PC-3 (cell line): ENCODE measurements at regions of chr14 and their contacts with region 1.

Region 1: DNA sequence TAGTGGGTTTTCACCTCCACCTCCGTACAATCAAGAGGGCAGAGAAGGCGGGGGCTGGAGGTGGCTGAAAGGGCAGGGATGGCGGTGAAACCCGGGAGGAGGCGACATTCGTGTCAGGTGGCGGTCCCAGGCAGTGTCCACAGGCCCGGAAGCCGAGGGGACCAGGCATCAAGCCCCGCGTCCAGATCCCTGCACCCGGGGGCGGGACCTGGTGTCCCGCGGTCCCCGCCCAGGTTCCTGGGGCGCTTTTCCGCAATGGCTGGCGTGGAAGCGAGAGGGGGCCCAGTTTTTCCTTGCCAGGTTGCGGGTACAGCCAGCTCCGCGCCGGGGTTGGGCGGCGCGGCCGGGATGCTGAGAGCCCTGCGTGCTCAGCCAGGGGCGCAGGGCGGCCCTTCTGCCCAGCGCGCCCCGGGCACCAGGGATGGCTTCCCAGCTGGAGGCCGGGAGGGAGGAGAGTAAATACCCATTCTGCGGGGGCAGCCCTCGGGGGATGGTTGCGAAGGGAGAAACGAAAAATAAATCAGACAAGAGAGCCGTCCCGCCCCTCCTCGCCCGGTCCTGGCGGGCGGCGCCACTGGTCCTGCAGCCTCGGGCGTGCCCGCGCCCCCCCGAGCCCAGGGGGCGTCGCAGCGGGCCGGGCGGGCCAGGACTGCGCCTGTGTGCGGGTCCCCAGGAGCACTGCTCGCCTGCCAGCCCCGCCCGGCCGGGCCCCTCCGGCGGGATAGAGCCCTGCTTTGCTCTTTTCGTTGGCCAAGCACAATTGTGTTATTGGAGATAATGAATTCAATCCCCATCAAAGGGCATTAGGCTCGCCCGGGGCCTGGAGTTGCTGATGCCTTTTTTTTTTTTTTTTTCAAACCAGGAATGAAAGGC is 11.5 kb downstream of the FOXA1 start:
- DNase-seq: peak; percentile 85
- ATAC-seq: peak; percentile 26
- H3K4me3 ChIP-seq: peak overlapping the region; percentile 96
- H3K27ac ChIP-seq: peak overlapping the region; percentile 99
- H3K4me1 ChIP-seq: peaks cover 86% of the 10 kb centered on the region
- H3K27me3 ChIP-seq: no peaks in the 10 kb centered on the region
- CTCF ChIP-seq: no peak; the same call in 1 of the 2 replicates

Region 2: GRCh38 chr14:36661756-36662498 is 921.7 kb before region 1 on chr14 and contains the start of gene PAX9:
- CTCF ChIA-PET with region 1: no interaction called
- POLR2A ChIA-PET with region 1: no interaction called
- intact Hi-C with region 1: loop called (anchors 2 kb)
- DNase-seq: peak; percentile 99
- ATAC-seq: peak; percentile 78
- H3K4me3 ChIP-seq: peak within 1 kb of the TSS; percentile 89
- H3K27ac ChIP-seq: peak within 1 kb of the TSS; percentile 77
- H3K4me1 ChIP-seq: peaks cover 25% of the 10 kb centered on the region
- H3K27me3 ChIP-seq: no peaks in the 10 kb centered on the region
- CTCF ChIP-seq: no peak
- total RNA-seq, gene PAX9: 14.3 and 14.9 TPM in 2 replicates

Region 3: GRCh38 chr14:37246427-37246914 is 337.1 kb before region 1 on chr14:
- CTCF ChIA-PET with region 1: no interaction called
- POLR2A ChIA-PET with region 1: no interaction called
- intact Hi-C with region 1: loop called (anchors 1 kb)
- DNase-seq: peak; percentile 79
- ATAC-seq: peak; percentile 65
- H3K4me3 ChIP-seq: no peak overlapping the region
- H3K27ac ChIP-seq: no peak overlapping the region
- H3K4me1 ChIP-seq: no peaks in the 10 kb centered on the region; the same call in 1 of the 2 replicates
- H3K27me3 ChIP-seq: no peaks in the 10 kb centered on the region
- CTCF ChIP-seq: peak; percentile 89

Region 4: DNA sequence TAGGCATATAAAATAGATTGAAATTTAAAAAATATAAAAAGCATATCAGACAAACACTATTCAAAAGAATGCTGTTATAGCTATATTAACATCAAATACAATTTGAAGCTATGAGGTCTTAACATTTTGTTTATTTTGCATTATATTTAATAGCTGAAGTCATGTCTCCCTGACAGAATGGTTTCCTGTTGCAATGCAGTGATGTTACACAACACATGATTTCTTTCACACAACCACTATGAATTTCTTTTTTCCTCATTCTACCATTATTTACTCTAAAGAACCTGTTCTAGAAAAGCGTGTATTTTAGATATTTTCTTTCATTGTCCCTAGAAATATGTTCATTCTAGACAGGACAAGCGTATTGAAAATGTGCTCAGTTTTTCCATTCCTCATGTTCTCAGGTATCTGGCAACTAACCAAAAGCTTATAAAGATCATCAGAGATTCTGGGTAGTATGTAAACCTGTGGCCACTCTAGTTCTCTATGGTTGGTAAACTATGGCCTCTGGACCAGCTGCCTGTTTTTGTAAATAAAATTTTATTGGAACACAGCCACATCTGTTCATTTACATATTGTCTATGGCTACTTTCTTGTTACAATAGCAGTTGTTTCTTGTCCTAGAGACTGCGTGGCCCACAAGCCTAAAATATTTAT is 172.4 kb before region 1 on chr14:
- CTCF ChIA-PET with region 1: no interaction called
- POLR2A ChIA-PET with region 1: interaction called, 23 read pairs
- intact Hi-C with region 1: no loop called
- DNase-seq: no peak
- ATAC-seq: no peak
- H3K4me3 ChIP-seq: no peak overlapping the region
- H3K27ac ChIP-seq: no peak overlapping the region
- H3K4me1 ChIP-seq: no peaks in the 10 kb centered on the region
- H3K27me3 ChIP-seq: no peaks in the 10 kb centered on the region
- CTCF ChIP-seq: no peak

Region 5: GRCh38 chr14:37546621-37547447 is 36.8 kb before region 1 on chr14:
- CTCF ChIA-PET with region 1: interaction called, 3 read pairs
- POLR2A ChIA-PET with region 1: interaction called, 4 read pairs
- intact Hi-C with region 1: loop called (anchors 1 kb)
- DNase-seq: peak; percentile 89
- ATAC-seq: peak; percentile 87
- H3K4me3 ChIP-seq: peak overlapping the region; percentile 65
- H3K27ac ChIP-seq: peak overlapping the region; percentile 97
- H3K4me1 ChIP-seq: peaks cover 62% of the 10 kb centered on the region
- H3K27me3 ChIP-seq: no peaks in the 10 kb centered on the region
- CTCF ChIP-seq: no peak

Region 6: DNA sequence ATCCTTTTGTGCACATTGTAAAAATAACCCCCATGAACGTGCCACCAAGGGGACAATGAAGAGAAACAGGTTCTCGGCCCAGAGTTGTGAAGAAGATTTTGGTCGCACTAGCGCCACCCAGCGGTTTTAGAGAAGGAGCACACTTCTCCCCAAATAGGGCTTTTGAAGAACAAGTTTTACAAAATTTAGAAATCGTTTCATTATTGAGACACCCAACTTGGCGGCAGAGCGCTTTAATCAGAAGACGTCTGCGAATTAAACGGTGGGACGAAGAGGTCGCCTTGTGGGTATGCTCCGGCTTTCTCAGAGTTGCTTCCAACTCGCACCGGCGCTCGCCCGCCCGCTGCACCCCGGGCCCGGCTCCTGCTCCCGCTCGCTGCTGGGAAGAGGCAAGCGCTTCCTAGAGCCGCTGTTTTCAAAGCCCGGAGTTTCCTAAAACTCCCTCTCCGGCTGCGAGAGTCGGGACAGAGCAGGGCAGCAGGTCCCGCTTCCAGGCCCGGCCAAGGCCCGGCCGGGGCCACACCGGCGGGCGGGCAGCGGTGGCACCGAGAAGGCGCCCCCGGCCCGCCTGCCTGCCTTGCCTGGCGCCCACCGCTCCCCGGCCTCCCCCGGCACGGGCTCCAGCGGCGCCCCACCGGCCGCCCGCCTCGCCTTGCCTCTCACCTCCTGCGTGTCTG is 10.8 kb after region 1 on chr14:
- CTCF ChIA-PET with region 1: no interaction called
- POLR2A ChIA-PET with region 1: interaction called, 42 read pairs
- intact Hi-C with region 1: no loop called
- DNase-seq: peak; percentile 92
- ATAC-seq: no peak
- H3K4me3 ChIP-seq: peak overlapping the region; percentile 96
- H3K27ac ChIP-seq: peak overlapping the region; percentile 99
- H3K4me1 ChIP-seq: peaks cover 28% of the 10 kb centered on the region
- H3K27me3 ChIP-seq: no peaks in the 10 kb centered on the region
- CTCF ChIP-seq: peak; percentile 92